B cell (primary cell): ENCODE measurements at regions of chr1 and their contacts with region 1.

Region 1: GRCh38 chr1:23168457-23169194 is at the start of gene LUZP1:
- DNase-seq: peak; percentile 89
- ATAC-seq: peak; percentile 89
- H3K4me3 ChIP-seq: peak within 1 kb of the TSS; percentile 68 to 99 (median 80)
- H3K4me3 Mint-ChIP-seq: peak within 1 kb of the TSS; percentile 93
- H3K27ac ChIP-seq: peak within 1 kb of the TSS; percentile 32 to 69
- H3K27ac Mint-ChIP-seq: peak within 1 kb of the TSS; percentile 89
- H3K4me1 ChIP-seq: peaks cover 19 to 23% of the 10 kb centered on the region in 2 donors
- H3K4me1 Mint-ChIP-seq: peaks cover 25% of the 10 kb centered on the region
- H3K27me3 ChIP-seq: no peaks in the 10 kb centered on the region
- H3K27me3 Mint-ChIP-seq: no peaks in the 10 kb centered on the region
- CTCF ChIP-seq: no peak
- total RNA-seq, gene LUZP1: 12.8 and 12.9 TPM in 2 replicates

Region 2: DNA sequence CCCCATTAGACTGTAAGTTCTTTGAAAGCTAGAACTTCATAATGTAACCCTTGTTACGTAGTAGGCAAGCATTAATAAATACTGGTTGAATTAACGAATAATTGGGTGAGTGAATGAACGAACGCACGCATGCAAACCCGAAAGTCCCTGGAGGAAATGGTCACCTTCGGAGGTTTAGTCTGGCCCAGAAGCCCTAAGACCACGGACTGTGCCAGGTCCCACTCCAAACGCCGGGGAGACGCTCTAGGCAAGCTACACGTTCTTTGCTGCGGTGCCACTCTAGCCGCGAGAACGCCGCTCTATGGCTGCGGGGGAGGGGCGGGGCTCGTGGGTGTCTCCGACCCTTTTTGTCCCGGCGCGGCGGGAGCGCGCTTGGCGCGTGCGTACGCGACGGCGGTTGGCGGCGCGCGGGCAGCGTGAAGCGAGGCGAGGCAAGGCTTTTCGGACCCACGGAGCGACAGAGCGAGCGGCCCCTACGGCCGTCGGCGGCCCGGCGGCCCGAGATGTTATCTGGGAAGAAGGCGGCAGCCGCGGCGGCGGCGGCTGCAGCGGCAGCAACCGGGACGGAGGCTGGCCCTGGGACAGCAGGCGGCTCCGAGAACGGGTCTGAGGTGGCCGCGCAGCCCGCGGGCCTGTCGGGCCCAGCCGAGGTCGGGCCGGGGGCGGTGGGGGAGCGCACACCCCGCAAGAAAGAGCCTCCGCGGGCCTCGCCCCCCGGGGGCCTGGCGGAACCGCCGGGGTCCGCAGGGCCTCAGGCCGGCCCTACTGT is 149.3 kb before region 1 on chr1 and contains the start of gene KDM1A:
- CTCF ChIA-PET with region 1: no interaction called
- POLR2A ChIA-PET with region 1: no interaction called
- intact Hi-C with region 1: loop called (anchors 1 kb)
- DNase-seq: peak; percentile 95
- ATAC-seq: peak; percentile 98
- H3K4me3 ChIP-seq: peak within 1 kb of the TSS; percentile 71 to 92 (median 75)
- H3K4me3 Mint-ChIP-seq: peak within 1 kb of the TSS; percentile 99
- H3K27ac ChIP-seq: peak within 1 kb of the TSS; percentile 16 to 81
- H3K27ac Mint-ChIP-seq: peak within 1 kb of the TSS; percentile 94
- H3K4me1 ChIP-seq: peaks cover 12 to 15% of the 10 kb centered on the region in 2 donors
- H3K4me1 Mint-ChIP-seq: peaks cover 41% of the 10 kb centered on the region
- H3K27me3 ChIP-seq: no peaks in the 10 kb centered on the region
- H3K27me3 Mint-ChIP-seq: no peaks in the 10 kb centered on the region
- CTCF ChIP-seq: no peak
- total RNA-seq, gene KDM1A: 45.9 and 47.4 TPM in 2 replicates